Activated naive CD4-positive, alpha-beta T cell treated with anti-CD3 and anti-CD28 coated beads for 36 hours (primary cell): ENCODE measurements at regions of chr2 and their contacts with region 1.

Region 1: DNA sequence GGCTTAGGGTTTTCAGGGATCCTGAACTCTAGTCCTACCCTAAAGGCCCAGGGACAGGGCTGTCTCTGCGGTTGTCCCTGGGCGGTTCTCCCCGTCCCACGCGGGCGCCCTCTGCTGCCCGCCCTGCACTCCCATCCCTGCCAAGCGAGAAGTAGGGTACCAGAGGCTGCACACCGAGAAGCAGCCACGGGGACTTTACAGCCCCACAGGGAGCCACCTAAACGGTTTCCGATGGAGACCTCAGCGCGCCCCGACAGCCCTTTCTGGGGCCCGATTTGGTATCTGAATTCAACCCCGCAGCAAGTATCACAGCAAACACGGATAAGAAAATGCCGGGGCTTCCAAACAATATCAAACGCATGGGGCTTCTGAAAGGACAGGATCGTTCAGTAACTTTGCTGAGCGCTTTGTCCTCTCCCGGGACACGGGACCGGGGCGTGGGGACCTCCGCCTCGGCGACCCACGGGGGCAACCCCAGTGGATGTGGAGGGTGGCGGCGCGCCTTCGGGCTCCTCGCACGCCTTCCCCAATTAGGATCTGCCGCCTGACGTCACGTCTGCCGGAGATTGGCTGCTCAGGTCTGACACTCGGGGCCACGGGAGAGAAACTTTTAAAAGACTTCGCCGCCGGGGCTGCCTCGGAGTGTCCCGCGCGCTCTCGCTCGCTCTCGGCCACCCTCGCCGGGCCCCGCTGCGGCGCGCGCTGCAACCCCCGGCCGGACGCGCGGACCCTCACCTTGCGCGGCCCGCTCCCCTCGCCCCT is at the start of gene LTBP1:
- DNase-seq: peak; percentile 67
- H3K4me3 Mint-ChIP-seq: peak within 1 kb of the TSS; percentile 74
- H3K27ac Mint-ChIP-seq: no peak within 1 kb of the TSS
- H3K4me1 Mint-ChIP-seq: no peaks in the 10 kb centered on the region
- H3K27me3 Mint-ChIP-seq: peaks cover 24% of the 10 kb centered on the region
- total RNA-seq, gene LTBP1: 0.10 to 0.14 TPM

Region 2: GRCh38 chr2:32553829-32554432 is 392.6 kb before region 1 on chr2:
- CTCF ChIA-PET with region 1: no interaction called
- intact Hi-C with region 1: loop called (anchors 1 kb)
- DNase-seq: no peak
- H3K4me3 Mint-ChIP-seq: no peak overlapping the region
- H3K27ac Mint-ChIP-seq: no peak overlapping the region
- H3K4me1 Mint-ChIP-seq: no peaks in the 10 kb centered on the region
- H3K27me3 Mint-ChIP-seq: no peaks in the 10 kb centered on the region

Region 3: DNA sequence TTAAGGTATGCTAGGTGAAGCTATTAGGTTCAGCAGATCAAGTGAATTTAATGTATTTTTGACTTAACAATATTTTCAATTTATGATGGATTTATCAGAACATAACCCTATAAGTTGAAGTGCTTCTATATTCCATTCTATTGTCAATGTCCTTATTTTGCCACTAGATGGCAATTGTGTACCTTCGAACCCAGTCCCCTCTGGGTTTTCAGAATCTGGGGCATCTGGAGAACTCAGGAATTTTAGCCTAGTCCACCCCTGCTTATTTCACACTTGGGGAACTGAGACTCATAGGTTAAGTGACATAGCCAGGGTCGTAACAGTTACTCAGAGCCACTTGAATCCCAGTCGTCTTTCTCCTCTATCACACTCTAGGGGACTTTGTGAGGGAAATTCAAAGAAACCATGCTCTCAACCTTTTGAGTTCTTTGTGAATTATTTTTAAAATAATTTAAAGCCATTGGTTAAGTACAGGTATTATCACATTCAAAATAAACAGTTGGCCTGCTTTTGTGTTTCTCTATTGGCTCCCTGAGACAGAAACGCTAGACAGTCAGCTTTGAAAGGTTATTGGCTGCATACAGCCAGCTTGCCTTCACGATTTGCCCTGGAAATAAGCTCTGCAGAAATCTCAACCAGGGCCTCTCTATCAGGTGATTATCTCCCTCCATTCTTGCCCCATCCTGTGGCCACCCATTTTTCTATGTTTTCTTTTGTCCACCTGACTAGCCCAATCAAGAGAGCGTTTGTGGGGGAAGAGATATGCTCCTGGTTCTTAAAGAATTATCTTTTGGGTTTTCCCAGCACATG is 173.7 kb before region 1 on chr2:
- CTCF ChIA-PET with region 1: no interaction called
- intact Hi-C with region 1: loop called (anchors 1 kb)
- DNase-seq: no peak
- H3K4me3 Mint-ChIP-seq: no peak overlapping the region
- H3K27ac Mint-ChIP-seq: no peak overlapping the region
- H3K4me1 Mint-ChIP-seq: peaks cover 4% of the 10 kb centered on the region
- H3K27me3 Mint-ChIP-seq: no peaks in the 10 kb centered on the region

Region 4: DNA sequence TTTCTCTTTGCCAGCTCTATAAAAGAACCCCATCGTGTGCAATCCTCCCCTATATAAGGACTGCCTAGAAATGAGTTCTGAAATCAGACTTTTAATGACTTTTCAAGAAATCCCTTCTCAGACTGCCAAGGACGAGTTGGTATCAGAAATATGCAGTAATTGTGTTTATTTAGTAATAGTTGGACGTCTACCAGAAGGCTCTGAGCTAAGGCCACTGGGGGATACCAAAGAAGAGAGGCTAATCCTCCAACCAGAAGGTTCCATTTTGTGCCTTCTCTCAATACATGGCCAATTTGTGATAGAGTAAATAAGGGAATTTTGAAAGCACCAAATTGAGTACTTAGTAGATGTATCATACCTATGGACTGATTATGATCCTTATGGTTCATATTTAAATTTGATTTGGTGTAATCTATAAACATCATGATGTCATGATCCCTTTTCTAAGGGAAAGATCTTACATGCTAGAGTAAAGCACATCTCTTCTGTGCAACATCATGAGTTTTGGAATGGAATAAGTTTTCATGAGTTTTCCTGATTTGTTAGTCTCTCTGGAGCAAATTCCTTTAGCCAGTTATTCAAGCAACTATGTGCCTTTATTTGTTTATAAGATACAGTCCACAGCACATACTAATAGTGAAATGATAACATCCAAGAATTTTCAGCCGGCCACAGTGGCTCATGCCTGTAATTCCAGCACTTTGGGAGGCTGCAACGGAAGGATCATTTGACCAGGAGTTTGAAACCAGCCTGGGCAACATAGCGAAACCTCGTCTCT is 82.0 kb before region 1 on chr2:
- CTCF ChIA-PET with region 1: no interaction called
- intact Hi-C with region 1: loop called (anchors 5 kb)
- DNase-seq: no peak
- H3K4me3 Mint-ChIP-seq: no peak overlapping the region
- H3K27ac Mint-ChIP-seq: no peak overlapping the region
- H3K4me1 Mint-ChIP-seq: peaks cover 6% of the 10 kb centered on the region
- H3K27me3 Mint-ChIP-seq: peaks cover 6% of the 10 kb centered on the region